ENCODE measurements at regions of chr9 and their contacts with region 1.

Region 1: GRCh38 chr9:1726993-1727759 is 288.0 kb upstream of the SMARCA2 start:
- DNase-seq: peak in 4 of 14 experiments; percentile 5 to 39 (median 28)
- ATAC-seq: no peak
- H3K4me3 ChIP-seq: no peak overlapping the region
- H3K4me3 Mint-ChIP-seq: no peak overlapping the region
- H3K27ac ChIP-seq: no peak overlapping the region
- H3K27ac Mint-ChIP-seq: no peak overlapping the region
- H3K4me1 ChIP-seq: no peaks in the 10 kb centered on the region
- H3K4me1 Mint-ChIP-seq: no peaks in the 10 kb centered on the region
- H3K27me3 ChIP-seq: no peaks in the 10 kb centered on the region
- H3K27me3 Mint-ChIP-seq: peaks cover 32% of the 10 kb centered on the region
- CTCF ChIP-seq: no peak

Region 2: DNA sequence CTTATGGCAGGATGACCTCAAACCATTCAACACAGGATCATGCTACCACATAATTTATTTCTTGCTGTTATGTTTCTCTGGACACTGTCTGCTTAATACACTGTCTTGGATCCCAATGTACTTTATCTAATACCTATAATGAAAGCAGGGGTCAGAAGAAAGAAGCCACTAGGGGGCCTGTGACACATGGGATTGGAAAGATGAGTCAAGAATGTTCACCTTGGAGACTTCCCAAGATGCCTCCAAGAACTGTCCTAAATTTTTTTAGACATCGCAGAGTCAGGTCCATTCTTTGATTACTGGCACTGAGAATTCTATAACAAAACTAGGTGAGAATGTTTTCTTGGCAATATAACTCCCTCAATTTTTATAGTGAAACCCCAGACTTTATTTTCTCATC is 17.8 kb before region 1 on chr9:
- CTCF ChIA-PET with region 1: no interaction called
- POLR2A ChIA-PET with region 1: no interaction called
- intact Hi-C with region 1: no loop called
- DNase-seq: peak in 4 of 14 experiments; percentile 4 to 27 (median 20)
- ATAC-seq: no peak
- H3K4me3 ChIP-seq: no peak overlapping the region
- H3K4me3 Mint-ChIP-seq: no peak overlapping the region
- H3K27ac ChIP-seq: no peak overlapping the region
- H3K27ac Mint-ChIP-seq: no peak overlapping the region
- H3K4me1 ChIP-seq: no peaks in the 10 kb centered on the region
- H3K4me1 Mint-ChIP-seq: no peaks in the 10 kb centered on the region
- H3K27me3 ChIP-seq: peaks cover 0 to 5% of the 10 kb centered on the region in 2 experiments
- H3K27me3 Mint-ChIP-seq: peaks cover 35% of the 10 kb centered on the region
- CTCF ChIP-seq: peak; percentile 30

Region 3: GRCh38 chr9:1869843-1870242 is 142.7 kb after region 1 on chr9:
- CTCF ChIA-PET with region 1: no interaction called
- POLR2A ChIA-PET with region 1: no interaction called
- intact Hi-C with region 1: loop called in 1 of 2 experiments (anchors 10 kb)
- DNase-seq: peak in 5 of 14 experiments; percentile 7 to 42 (median 29)
- ATAC-seq: peak; percentile 57
- H3K4me3 ChIP-seq: no peak overlapping the region
- H3K4me3 Mint-ChIP-seq: no peak overlapping the region
- H3K27ac ChIP-seq: no peak overlapping the region
- H3K27ac Mint-ChIP-seq: no peak overlapping the region
- H3K4me1 ChIP-seq: peaks cover 4% of the 10 kb centered on the region
- H3K4me1 Mint-ChIP-seq: no peaks in the 10 kb centered on the region
- H3K27me3 ChIP-seq: no peaks in the 10 kb centered on the region
- H3K27me3 Mint-ChIP-seq: no peaks in the 10 kb centered on the region
- CTCF ChIP-seq: peak; percentile 46